Activated naive CD4-positive, alpha-beta T cell treated with anti-CD3 and anti-CD28 coated beads for 36 hours (primary cell): ENCODE measurements at regions of chrX and their contacts with region 1.

Region 1: GRCh38 chrX:49291615-49292337 is 11.7 kb upstream of the GAGE10 start:
- DNase-seq: peak; percentile 88
- H3K4me3 Mint-ChIP-seq: no peak overlapping the region
- H3K27ac Mint-ChIP-seq: no peak overlapping the region
- H3K4me1 Mint-ChIP-seq: peaks cover 35% of the 10 kb centered on the region
- H3K27me3 Mint-ChIP-seq: no peaks in the 10 kb centered on the region

Region 2: DNA sequence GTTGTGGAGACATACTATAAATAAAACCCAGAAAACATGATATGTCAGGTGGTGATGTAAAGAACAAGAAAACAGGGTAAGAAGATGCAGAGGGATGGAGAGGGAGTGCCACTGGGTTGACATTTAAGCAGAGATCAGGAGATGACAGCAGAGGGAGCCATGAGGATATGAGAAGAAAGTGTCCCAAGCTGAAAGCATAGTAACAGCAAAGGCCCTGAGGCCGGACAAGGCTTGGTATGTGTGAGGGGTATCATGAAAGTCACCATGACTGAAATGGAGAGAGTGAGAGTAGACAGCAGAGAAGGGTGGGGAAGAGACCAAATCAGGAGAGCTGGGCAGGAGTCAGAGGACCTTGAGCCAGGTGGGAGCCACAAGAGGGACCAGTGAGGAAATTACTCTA is 171.7 kb before region 1 on chrX:
- CTCF ChIA-PET with region 1: no interaction called
- intact Hi-C with region 1: no loop called
- DNase-seq: no peak
- H3K4me3 Mint-ChIP-seq: no peak overlapping the region
- H3K27ac Mint-ChIP-seq: no peak overlapping the region
- H3K4me1 Mint-ChIP-seq: peaks cover 35% of the 10 kb centered on the region
- H3K27me3 Mint-ChIP-seq: no peaks in the 10 kb centered on the region

Region 3: GRCh38 chrX:49309401-49309981 is 17.7 kb after region 1 on chrX:
- CTCF ChIA-PET with region 1: interaction called, 17 read pairs
- intact Hi-C with region 1: no loop called
- DNase-seq: peak; percentile 43
- H3K4me3 Mint-ChIP-seq: peak overlapping the region; percentile 64
- H3K27ac Mint-ChIP-seq: peak overlapping the region; percentile 82
- H3K4me1 Mint-ChIP-seq: peaks cover 17% of the 10 kb centered on the region
- H3K27me3 Mint-ChIP-seq: no peaks in the 10 kb centered on the region

Region 4: GRCh38 chrX:49644991-49645637 is 353.3 kb after region 1 on chrX:
- CTCF ChIA-PET with region 1: no interaction called
- intact Hi-C with region 1: loop called (anchors 10 kb)
- DNase-seq: no peak
- H3K4me3 Mint-ChIP-seq: no peak overlapping the region
- H3K27ac Mint-ChIP-seq: no peak overlapping the region
- H3K4me1 Mint-ChIP-seq: no peaks in the 10 kb centered on the region
- H3K27me3 Mint-ChIP-seq: no peaks in the 10 kb centered on the region